Right ventricle myocardium inferior (tissue), 1 donor: ENCODE measurements at regions of chr3 and their contacts with region 1.

Region 1: GRCh38 chr3:191328962-191329653 is at the start of gene CCDC50:
- DNase-seq: peak; percentile 92
- ATAC-seq: peak; percentile 93
- total RNA-seq, gene CCDC50: 57.8 TPM

Region 2: GRCh38 chr3:191244242-191244867 is 84.8 kb before region 1 on chr3:
- intact Hi-C with region 1: loop called (anchors 10 kb)
- DNase-seq: no peak
- ATAC-seq: no peak

Region 3: GRCh38 chr3:191369616-191370010 is 40.5 kb after region 1 on chr3:
- intact Hi-C with region 1: loop called (anchors 5 kb)
- DNase-seq: no peak
- ATAC-seq: peak; percentile 83

Region 4: DNA sequence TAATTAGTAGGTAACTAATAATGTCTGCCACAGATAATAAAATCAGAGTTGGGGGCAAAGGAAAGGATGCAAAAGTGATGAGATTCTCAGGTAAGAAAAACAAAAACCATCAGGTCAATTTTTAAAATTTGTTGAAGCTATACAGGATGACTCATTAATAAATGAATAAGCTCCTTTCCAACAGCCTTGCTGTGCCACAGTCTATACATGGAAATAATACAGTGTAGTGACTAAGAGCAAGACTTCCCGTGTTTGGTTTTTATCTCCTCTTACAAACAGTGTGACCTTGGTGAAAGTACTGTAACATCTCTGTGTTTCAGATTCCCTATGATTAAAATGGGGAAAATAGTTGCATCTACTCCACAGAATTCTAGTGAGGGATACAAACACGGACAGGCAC is 463.5 kb after region 1 on chr3:
- intact Hi-C with region 1: no loop called
- DNase-seq: no peak
- ATAC-seq: no peak